Prostate gland (tissue), 2 donors: ENCODE measurements at regions of chr7 and their contacts with region 1.

Region 1: GRCh38 chr7:104231054-104232046 is 23.5 kb upstream of the ORC5 start:
- DNase-seq: peak; percentile 25
- H3K4me3 ChIP-seq: no peak overlapping the region
- H3K27ac ChIP-seq: no peak overlapping the region
- H3K4me1 ChIP-seq: no peaks in the 10 kb centered on the region
- H3K27me3 ChIP-seq: no peaks in the 10 kb centered on the region
- CTCF ChIP-seq: peak; percentile 18 to 58 (median 55)
- POLR2A ChIP-seq: no peak

Region 2: GRCh38 chr7:104923010-104923421 is 691.7 kb after region 1 on chr7:
- intact Hi-C with region 1: loop called (anchors 5 kb)
- DNase-seq: peak; percentile 80
- H3K4me3 ChIP-seq: no peak overlapping the region
- H3K27ac ChIP-seq: peak overlapping the region; percentile 42 to 60
- H3K4me1 ChIP-seq: no peaks in the 10 kb centered on the region
- H3K27me3 ChIP-seq: no peaks in the 10 kb centered on the region
- CTCF ChIP-seq: peak; percentile 64 to 86 (median 82)
- POLR2A ChIP-seq: no peak